Caco-2 (cell line): ENCODE measurements at regions of chr7 and their contacts with region 1.

Region 1: DNA sequence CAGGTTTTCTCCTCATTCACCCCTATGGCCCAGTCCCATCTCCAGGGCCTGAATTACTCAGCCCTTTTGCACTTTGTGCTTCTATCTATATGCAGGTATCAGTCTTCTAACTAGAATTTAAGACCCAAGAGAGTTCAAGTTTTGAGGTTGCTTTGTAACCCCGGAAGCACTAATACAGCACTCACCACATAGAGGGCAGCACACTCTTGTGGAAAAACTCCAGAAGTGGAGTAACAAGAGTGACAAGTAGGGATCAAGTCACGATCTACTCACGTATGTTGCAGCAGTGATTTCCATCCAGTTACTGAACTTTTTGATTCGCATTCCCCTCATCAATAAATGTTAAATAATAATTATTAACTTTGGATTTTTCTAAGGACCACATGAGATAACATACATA is 151.0 kb downstream of the CHCHD3 start:
- DNase-seq: peak in 1 of 2 experiments; percentile 34
- H3K4me3 ChIP-seq: no peak overlapping the region
- H3K4me3 Mint-ChIP-seq: no peak overlapping the region
- H3K27ac Mint-ChIP-seq: no peak overlapping the region
- H3K4me1 ChIP-seq: no peaks in the 10 kb centered on the region
- H3K4me1 Mint-ChIP-seq: peaks cover 7% of the 10 kb centered on the region
- H3K27me3 ChIP-seq: no peaks in the 10 kb centered on the region
- H3K27me3 Mint-ChIP-seq: no peaks in the 10 kb centered on the region
- CTCF ChIP-seq: peak in 1 of 2 experiments; percentile 64

Region 2: GRCh38 chr7:132709971-132710567 is 220.8 kb before region 1 on chr7:
- CTCF ChIA-PET with region 1: interaction called, 3 read pairs
- POLR2A ChIA-PET with region 1: no interaction called
- intact Hi-C with region 1: loop called (anchors 1 kb)
- DNase-seq: peak in 1 of 2 experiments; percentile 41
- H3K4me3 ChIP-seq: no peak overlapping the region
- H3K4me3 Mint-ChIP-seq: no peak overlapping the region
- H3K27ac Mint-ChIP-seq: no peak overlapping the region
- H3K4me1 ChIP-seq: no peaks in the 10 kb centered on the region
- H3K4me1 Mint-ChIP-seq: no peaks in the 10 kb centered on the region
- H3K27me3 ChIP-seq: no peaks in the 10 kb centered on the region
- H3K27me3 Mint-ChIP-seq: peaks cover 18% of the 10 kb centered on the region
- CTCF ChIP-seq: peak; percentile 38 to 72

Region 3: DNA sequence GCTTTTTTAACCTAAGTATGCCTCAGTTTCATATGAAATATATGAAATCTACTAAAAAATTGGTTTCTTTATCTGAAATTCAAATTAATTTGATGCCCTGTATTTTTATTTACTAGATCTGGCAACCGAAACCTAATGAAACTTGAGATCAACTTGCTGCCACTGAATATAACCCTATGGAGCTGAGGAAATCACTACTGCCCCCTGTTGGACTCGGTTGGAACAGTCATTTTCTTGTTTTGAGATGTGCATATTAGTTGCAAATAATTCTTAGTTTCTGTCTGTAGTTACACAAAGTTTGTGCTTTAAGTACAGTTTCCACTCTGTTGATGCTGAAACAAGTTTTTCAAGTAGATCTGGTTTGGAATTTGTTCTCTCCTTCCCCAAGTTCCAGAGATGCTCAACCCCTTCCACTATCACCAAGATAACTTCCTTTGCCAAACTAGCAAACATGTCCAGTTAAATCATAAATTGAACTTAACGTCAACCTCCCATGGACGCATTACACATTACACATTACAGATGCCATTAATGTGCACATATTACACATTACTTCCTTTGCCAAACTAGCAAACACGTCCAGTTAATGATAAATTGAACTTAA is 299.8 kb after region 1 on chr7:
- CTCF ChIA-PET with region 1: no interaction called
- POLR2A ChIA-PET with region 1: no interaction called
- intact Hi-C with region 1: loop called (anchors 1 kb)
- DNase-seq: peak in 1 of 2 experiments; percentile 51
- H3K4me3 ChIP-seq: no peak overlapping the region
- H3K4me3 Mint-ChIP-seq: no peak overlapping the region
- H3K27ac Mint-ChIP-seq: no peak overlapping the region
- H3K4me1 ChIP-seq: no peaks in the 10 kb centered on the region
- H3K4me1 Mint-ChIP-seq: no peaks in the 10 kb centered on the region
- H3K27me3 ChIP-seq: no peaks in the 10 kb centered on the region
- H3K27me3 Mint-ChIP-seq: peaks cover 12% of the 10 kb centered on the region
- CTCF ChIP-seq: peak; percentile 39 to 61

Region 4: DNA sequence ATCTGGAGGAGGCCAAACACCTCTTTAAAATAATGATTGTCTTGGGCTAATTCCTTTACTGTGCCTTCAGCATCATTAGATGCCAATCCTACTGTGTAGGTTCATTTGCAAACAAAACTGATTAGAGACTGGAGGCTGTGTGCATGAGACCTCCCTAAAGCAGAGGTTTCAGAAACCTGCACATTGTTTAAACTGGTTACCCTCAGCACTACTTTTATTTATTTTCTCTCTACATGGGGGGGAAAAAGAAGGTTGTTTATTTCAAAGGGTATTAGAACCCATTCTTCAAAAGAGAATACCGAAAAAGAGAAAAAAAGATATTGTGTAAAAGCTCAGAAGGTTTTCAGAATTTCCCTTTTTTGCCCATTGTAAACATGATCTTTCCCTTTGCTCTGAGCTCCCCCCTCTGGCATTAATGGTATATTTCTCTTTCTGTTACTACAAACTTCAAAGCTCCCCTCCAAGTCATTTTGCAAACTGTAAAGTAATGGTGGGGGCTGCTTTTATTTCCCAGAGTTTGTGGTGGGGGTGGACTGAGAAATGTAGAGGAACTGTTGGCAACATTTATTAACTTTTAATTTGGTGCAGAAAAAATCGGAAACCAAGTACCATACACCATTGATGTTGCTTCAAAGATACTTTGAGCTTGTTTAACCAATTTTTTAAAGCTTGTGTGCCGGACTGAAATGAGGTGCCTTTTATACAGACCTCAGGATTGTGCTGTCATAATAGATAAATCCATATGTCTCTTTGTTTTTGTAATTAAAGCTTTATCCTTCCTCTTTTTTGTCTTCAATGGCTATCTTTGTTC is 503.4 kb after region 1 on chr7:
- CTCF ChIA-PET with region 1: no interaction called
- POLR2A ChIA-PET with region 1: no interaction called
- intact Hi-C with region 1: loop called (anchors 1 kb)
- DNase-seq: peak in 1 of 2 experiments; percentile 31
- H3K4me3 ChIP-seq: no peak overlapping the region
- H3K4me3 Mint-ChIP-seq: no peak overlapping the region
- H3K27ac Mint-ChIP-seq: no peak overlapping the region
- H3K4me1 ChIP-seq: peaks cover 14% of the 10 kb centered on the region
- H3K4me1 Mint-ChIP-seq: peaks cover 17% of the 10 kb centered on the region
- H3K27me3 ChIP-seq: no peaks in the 10 kb centered on the region
- H3K27me3 Mint-ChIP-seq: no peaks in the 10 kb centered on the region
- CTCF ChIP-seq: peak; percentile 48 to 53